IMR-90 (cell line): ENCODE measurements at regions of chr4 and their contacts with region 1.

Region 1: GRCh38 chr4:94757192-94758139 is at the start of gene BMPR1B:
- DNase-seq: peak; percentile 67
- ATAC-seq: peak; percentile 74
- H3K4me3 ChIP-seq: peak within 1 kb of the TSS; percentile 42
- H3K27ac ChIP-seq: no peak within 1 kb of the TSS; the same call in 1 of the 2 replicates
- H3K4me1 ChIP-seq: no peaks in the 10 kb centered on the region
- H3K27me3 ChIP-seq: peaks cover 33% of the 10 kb centered on the region
- CTCF ChIP-seq: 0 out of 2 replicates have a peak, but pooled peaks have one; percentile 21
- POLR2A ChIP-seq: no peak
- RAD21 ChIP-seq: no peak
- total RNA-seq, gene BMPR1B: 0.90 and 1.1 TPM in 2 replicates

Region 2: DNA sequence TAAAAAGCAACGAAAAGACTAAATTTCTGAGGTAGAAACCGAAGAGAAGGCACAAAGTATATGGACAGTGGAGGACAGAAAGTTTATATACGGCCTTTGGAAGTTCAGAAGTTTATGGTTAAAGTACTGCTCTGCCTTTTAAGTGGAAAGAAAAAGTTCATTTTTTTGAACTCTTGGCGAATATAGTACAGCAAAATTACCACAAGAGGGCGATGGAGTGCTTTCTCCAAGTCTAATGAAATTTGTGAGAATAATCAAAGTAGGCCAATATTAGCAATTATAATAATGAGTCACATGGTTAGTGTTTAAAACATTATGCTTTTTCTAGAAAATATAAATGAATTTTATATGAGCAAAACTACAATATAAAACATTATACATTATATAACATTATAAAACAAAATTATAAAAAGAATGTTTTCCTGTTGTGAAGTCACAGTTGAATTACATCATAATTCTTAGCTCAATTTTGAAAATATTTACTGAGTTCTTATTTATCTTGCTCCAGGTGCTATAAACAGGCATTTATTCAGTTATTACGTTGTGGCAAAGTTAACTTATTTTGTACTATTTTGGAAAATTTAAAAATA is 135.9 kb before region 1 on chr4:
- CTCF ChIA-PET with region 1: no interaction called
- POLR2A ChIA-PET with region 1: interaction called, 4 read pairs
- dilution Hi-C with region 1: no loop called
- in situ Hi-C with region 1: no loop called
- intact Hi-C with region 1: loop called (anchors 5 kb)
- DNase-seq: peak; percentile 61
- ATAC-seq: peak; percentile 56
- H3K4me3 ChIP-seq: no peak overlapping the region
- H3K27ac ChIP-seq: no peak overlapping the region
- H3K4me1 ChIP-seq: no peaks in the 10 kb centered on the region
- H3K27me3 ChIP-seq: no peaks in the 10 kb centered on the region
- CTCF ChIP-seq: peak; percentile 93
- POLR2A ChIP-seq: no peak
- RAD21 ChIP-seq: peak; percentile 81

Region 3: GRCh38 chr4:94690851-94691254 is 66.6 kb before region 1 on chr4:
- CTCF ChIA-PET with region 1: no interaction called
- POLR2A ChIA-PET with region 1: no interaction called
- dilution Hi-C with region 1: no loop called
- in situ Hi-C with region 1: no loop called
- intact Hi-C with region 1: no loop called
- DNase-seq: peak; percentile 51
- ATAC-seq: peak; percentile 77
- H3K4me3 ChIP-seq: no peak overlapping the region
- H3K27ac ChIP-seq: no peak overlapping the region
- H3K4me1 ChIP-seq: 0 out of 2 replicates have a peak, but pooled peaks cover 2% of the 10 kb centered on the region
- H3K27me3 ChIP-seq: no peaks in the 10 kb centered on the region
- CTCF ChIP-seq: no peak
- POLR2A ChIP-seq: no peak
- RAD21 ChIP-seq: no peak

Region 4: GRCh38 chr4:94827481-94828110 is 70.1 kb after region 1 on chr4:
- CTCF ChIA-PET with region 1: interaction called, 6 read pairs
- POLR2A ChIA-PET with region 1: interaction called, 10 read pairs
- dilution Hi-C with region 1: no loop called
- in situ Hi-C with region 1: no loop called
- intact Hi-C with region 1: no loop called
- DNase-seq: peak; percentile 92
- ATAC-seq: peak; percentile 98
- H3K4me3 ChIP-seq: no peak overlapping the region
- H3K27ac ChIP-seq: 0 out of 2 replicates have a peak overlapping the region, but pooled peaks have one; percentile 29
- H3K4me1 ChIP-seq: peaks cover 2% of the 10 kb centered on the region; the same call in 1 of the 2 replicates
- H3K27me3 ChIP-seq: no peaks in the 10 kb centered on the region; the same call in 1 of the 2 replicates
- CTCF ChIP-seq: no peak
- POLR2A ChIP-seq: no peak
- RAD21 ChIP-seq: no peak

Region 5: GRCh38 chr4:94856030-94856429 is 98.6 kb after region 1 on chr4:
- CTCF ChIA-PET with region 1: no interaction called
- POLR2A ChIA-PET with region 1: no interaction called
- dilution Hi-C with region 1: no loop called
- in situ Hi-C with region 1: no loop called
- intact Hi-C with region 1: no loop called
- DNase-seq: no peak
- ATAC-seq: no peak
- H3K4me3 ChIP-seq: no peak overlapping the region
- H3K27ac ChIP-seq: no peak overlapping the region
- H3K4me1 ChIP-seq: no peaks in the 10 kb centered on the region
- H3K27me3 ChIP-seq: no peaks in the 10 kb centered on the region
- CTCF ChIP-seq: no peak
- POLR2A ChIP-seq: no peak
- RAD21 ChIP-seq: no peak

Region 6: GRCh38 chr4:94877973-94878372 is 120.5 kb after region 1 on chr4:
- CTCF ChIA-PET with region 1: no interaction called
- POLR2A ChIA-PET with region 1: no interaction called
- dilution Hi-C with region 1: no loop called
- in situ Hi-C with region 1: no loop called
- intact Hi-C with region 1: loop called (anchors 2 kb)
- DNase-seq: peak; percentile 66
- ATAC-seq: peak; percentile 76
- H3K4me3 ChIP-seq: no peak overlapping the region
- H3K27ac ChIP-seq: peak overlapping the region; percentile 84; the same call in 1 of the 2 replicates
- H3K4me1 ChIP-seq: peaks cover 10% of the 10 kb centered on the region
- H3K27me3 ChIP-seq: no peaks in the 10 kb centered on the region
- CTCF ChIP-seq: no peak
- POLR2A ChIP-seq: no peak
- RAD21 ChIP-seq: no peak

Region 7: DNA sequence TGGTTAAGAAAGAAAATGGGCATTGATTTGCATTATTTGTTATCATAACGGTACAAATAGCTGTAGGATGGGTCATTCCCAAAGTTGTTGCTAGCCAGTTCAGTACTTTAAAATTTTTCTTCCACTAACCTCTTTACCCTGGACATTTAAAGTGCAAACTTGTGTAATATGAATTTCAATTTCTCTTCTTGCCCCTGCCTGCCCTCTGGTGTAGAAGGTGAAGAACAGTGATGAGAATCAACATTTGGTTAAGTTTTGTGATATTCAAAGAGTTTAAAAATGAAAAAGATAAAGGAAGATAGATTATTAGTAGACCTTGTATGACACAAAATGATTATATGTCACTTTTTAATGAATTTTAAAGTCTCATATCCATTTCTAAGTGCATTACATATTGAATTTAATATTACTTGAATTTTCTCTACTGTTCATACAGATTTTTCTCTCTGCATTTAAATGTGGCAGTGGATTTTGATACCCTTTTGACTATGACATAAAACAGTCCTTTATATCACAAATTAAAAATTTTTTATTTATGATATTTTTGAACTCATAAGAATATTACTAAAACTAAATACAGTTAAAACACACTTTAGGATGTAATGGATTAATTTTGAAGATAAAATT is 338.0 kb after region 1 on chr4:
- CTCF ChIA-PET with region 1: no interaction called
- POLR2A ChIA-PET with region 1: no interaction called
- dilution Hi-C with region 1: no loop called
- in situ Hi-C with region 1: loop called (anchors 25 kb)
- intact Hi-C with region 1: loop called (anchors 1 kb)
- DNase-seq: peak; percentile 59
- ATAC-seq: peak; percentile 82
- H3K4me3 ChIP-seq: no peak overlapping the region
- H3K27ac ChIP-seq: no peak overlapping the region
- H3K4me1 ChIP-seq: no peaks in the 10 kb centered on the region
- H3K27me3 ChIP-seq: no peaks in the 10 kb centered on the region
- CTCF ChIP-seq: peak; percentile 79
- POLR2A ChIP-seq: no peak
- RAD21 ChIP-seq: peak; percentile 84

Region 8: GRCh38 chr4:95124906-95125504 is 367.5 kb after region 1 on chr4:
- CTCF ChIA-PET with region 1: no interaction called
- POLR2A ChIA-PET with region 1: no interaction called
- dilution Hi-C with region 1: no loop called
- in situ Hi-C with region 1: loop called (anchors 25 kb)
- intact Hi-C with region 1: loop called (anchors 1 kb)
- DNase-seq: peak; percentile 76
- ATAC-seq: peak; percentile 89
- H3K4me3 ChIP-seq: no peak overlapping the region
- H3K27ac ChIP-seq: no peak overlapping the region
- H3K4me1 ChIP-seq: no peaks in the 10 kb centered on the region
- H3K27me3 ChIP-seq: no peaks in the 10 kb centered on the region
- CTCF ChIP-seq: peak; percentile 77
- POLR2A ChIP-seq: no peak
- RAD21 ChIP-seq: peak; percentile 80